Mammary epithelial cell (primary cell): ENCODE measurements at regions of chr16 and their contacts with region 1.

Region 1: GRCh38 chr16:74606521-74607310 is at the start of gene GLG1:
- DNase-seq: peak; percentile 87
- H3K4me3 ChIP-seq: peak within 1 kb of the TSS; percentile 87 to 99 (median 88)
- H3K27ac ChIP-seq: peak within 1 kb of the TSS; percentile 66
- H3K4me1 ChIP-seq: peaks cover 17% of the 10 kb centered on the region
- H3K27me3 ChIP-seq: no peaks in the 10 kb centered on the region
- CTCF ChIP-seq: no peak
- total RNA-seq, gene GLG1: 108 to 150 TPM

Region 2: DNA sequence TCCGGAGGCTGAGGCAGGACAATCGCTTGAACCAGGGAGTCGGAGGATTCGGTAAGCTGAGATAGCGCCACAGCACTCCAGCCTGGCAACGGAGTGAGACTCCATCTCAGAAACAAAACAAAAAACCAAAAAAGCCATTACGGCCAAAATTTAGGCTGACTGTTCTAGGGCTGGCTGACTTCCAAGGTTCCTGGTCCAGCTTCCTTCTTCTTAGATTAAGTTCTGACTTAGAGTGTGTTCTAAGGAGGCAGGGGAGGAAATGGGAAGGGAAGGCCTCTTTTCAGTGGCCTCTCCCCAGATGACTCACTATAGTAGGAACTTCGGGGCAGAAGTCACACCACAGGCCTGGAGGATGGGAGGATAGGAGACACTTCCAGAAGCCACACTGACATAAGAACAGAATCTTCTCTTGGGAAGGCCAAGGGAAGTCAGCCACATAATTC is 157.7 kb before region 1 on chr16:
- CTCF ChIA-PET with region 1: no interaction called
- dilution Hi-C with region 1: no loop called
- in situ Hi-C with region 1: no loop called
- intact Hi-C with region 1: loop called (anchors 5 kb)
- DNase-seq: peak; percentile 81
- H3K4me3 ChIP-seq: no peak overlapping the region
- H3K27ac ChIP-seq: peak overlapping the region; percentile 82
- H3K4me1 ChIP-seq: peaks cover 36% of the 10 kb centered on the region
- H3K27me3 ChIP-seq: no peaks in the 10 kb centered on the region
- CTCF ChIP-seq: no peak

Region 3: GRCh38 chr16:74463886-74464285 is 142.8 kb before region 1 on chr16:
- CTCF ChIA-PET with region 1: no interaction called
- dilution Hi-C with region 1: no loop called
- in situ Hi-C with region 1: no loop called
- intact Hi-C with region 1: loop called (anchors 2 kb)
- DNase-seq: no peak
- H3K4me3 ChIP-seq: no peak overlapping the region
- H3K27ac ChIP-seq: no peak overlapping the region
- H3K4me1 ChIP-seq: peaks cover 22% of the 10 kb centered on the region
- H3K27me3 ChIP-seq: no peaks in the 10 kb centered on the region
- CTCF ChIP-seq: no peak

Region 4: GRCh38 chr16:74480141-74481029 is 126.3 kb before region 1 on chr16:
- CTCF ChIA-PET with region 1: no interaction called
- dilution Hi-C with region 1: no loop called
- in situ Hi-C with region 1: loop called in 1 of 2 experiments (anchors 25 kb)
- intact Hi-C with region 1: no loop called
- DNase-seq: peak; percentile 72
- H3K4me3 ChIP-seq: no peak overlapping the region
- H3K27ac ChIP-seq: peak overlapping the region; percentile 5
- H3K4me1 ChIP-seq: peaks cover 19% of the 10 kb centered on the region
- H3K27me3 ChIP-seq: no peaks in the 10 kb centered on the region
- CTCF ChIP-seq: no peak

Region 5: GRCh38 chr16:74501484-74502479 is 104.9 kb before region 1 on chr16:
- CTCF ChIA-PET with region 1: no interaction called
- dilution Hi-C with region 1: no loop called
- in situ Hi-C with region 1: loop called in 1 of 2 experiments (anchors 25 kb)
- intact Hi-C with region 1: loop called (anchors 5 kb)
- DNase-seq: no peak
- H3K4me3 ChIP-seq: no peak overlapping the region
- H3K27ac ChIP-seq: no peak overlapping the region
- H3K4me1 ChIP-seq: no peaks in the 10 kb centered on the region
- H3K27me3 ChIP-seq: no peaks in the 10 kb centered on the region
- CTCF ChIP-seq: no peak

Region 6: GRCh38 chr16:74556375-74556922 is 50.3 kb before region 1 on chr16:
- CTCF ChIA-PET with region 1: no interaction called
- dilution Hi-C with region 1: no loop called
- in situ Hi-C with region 1: no loop called
- intact Hi-C with region 1: no loop called
- DNase-seq: peak; percentile 64
- H3K4me3 ChIP-seq: no peak overlapping the region
- H3K27ac ChIP-seq: peak overlapping the region; percentile 44
- H3K4me1 ChIP-seq: peaks cover 27% of the 10 kb centered on the region
- H3K27me3 ChIP-seq: no peaks in the 10 kb centered on the region
- CTCF ChIP-seq: no peak

Region 7: GRCh38 chr16:74657870-74658642 is 51.3 kb after region 1 on chr16:
- CTCF ChIA-PET with region 1: no interaction called
- dilution Hi-C with region 1: no loop called
- in situ Hi-C with region 1: no loop called
- intact Hi-C with region 1: no loop called
- DNase-seq: peak; percentile 4
- H3K4me3 ChIP-seq: no peak overlapping the region
- H3K27ac ChIP-seq: no peak overlapping the region
- H3K4me1 ChIP-seq: peaks cover 21% of the 10 kb centered on the region
- H3K27me3 ChIP-seq: no peaks in the 10 kb centered on the region
- CTCF ChIP-seq: no peak